ENCODE measurements at regions of chr2 and their contacts with region 1.

Region 1: GRCh38 chr2:157492189-157492773 is 48.4 kb upstream of the CYTIP start:
- DNase-seq: peak; percentile 65 to 70 (median 69)
- H3K4me3 ChIP-seq: no peak overlapping the region
- H3K4me3 Mint-ChIP-seq: no peak overlapping the region
- H3K27ac ChIP-seq: no peak overlapping the region
- H3K27ac Mint-ChIP-seq: peak overlapping the region in 1 of 7 donors; percentile 65
- H3K4me1 ChIP-seq: peaks cover 8% of the 10 kb centered on the region
- H3K4me1 Mint-ChIP-seq: peaks cover 17 to 19% (median 18%) of the 10 kb centered on the region in 4 donors
- H3K27me3 ChIP-seq: no peaks in the 10 kb centered on the region
- H3K27me3 Mint-ChIP-seq: no peaks in the 10 kb centered on the region

Region 2: DNA sequence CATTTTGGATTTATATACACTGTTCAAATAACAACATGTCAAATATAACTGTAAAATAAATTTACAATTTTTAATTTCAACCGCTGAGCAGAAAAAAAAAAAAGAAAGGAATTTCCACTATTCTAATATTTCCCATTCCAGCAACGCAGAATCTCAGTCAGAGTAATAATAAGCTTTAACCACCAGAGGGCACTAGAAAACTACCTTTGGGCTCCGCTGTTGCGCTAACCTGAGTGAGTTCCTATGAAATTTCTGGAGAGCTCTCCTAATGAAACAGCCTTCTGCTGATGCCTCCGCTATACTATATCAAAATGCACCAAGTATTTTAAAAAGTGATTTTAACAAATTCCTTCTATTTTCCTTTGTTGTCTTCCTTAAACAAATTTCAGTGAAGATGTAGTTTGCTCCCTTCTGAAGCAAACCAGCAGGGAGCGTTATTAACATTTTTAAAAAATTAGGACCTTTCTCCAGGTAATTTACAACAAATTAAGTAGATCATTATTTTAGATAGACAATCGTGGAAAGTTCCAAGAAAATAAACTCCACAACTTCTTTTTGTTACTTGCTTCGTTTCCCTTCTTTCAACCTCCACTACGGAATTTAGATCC is 189.7 kb before region 1 on chr2:
- CTCF ChIA-PET with region 1: interaction called, 100 read pairs
- POLR2A ChIA-PET with region 1: interaction called, 6 read pairs
- intact Hi-C with region 1: loop called (anchors 1 kb)
- DNase-seq: peak in 4 of 5 donors; percentile 56 to 63 (median 60)
- H3K4me3 ChIP-seq: no peak overlapping the region
- H3K4me3 Mint-ChIP-seq: no peak overlapping the region
- H3K27ac ChIP-seq: no peak overlapping the region
- H3K27ac Mint-ChIP-seq: no peak overlapping the region
- H3K4me1 ChIP-seq: no peaks in the 10 kb centered on the region
- H3K4me1 Mint-ChIP-seq: peaks cover 0 to 6% (median 2%) of the 10 kb centered on the region in 4 donors
- H3K27me3 ChIP-seq: no peaks in the 10 kb centered on the region
- H3K27me3 Mint-ChIP-seq: peaks cover 1 to 3% of the 10 kb centered on the region in 2 donors

Region 3: DNA sequence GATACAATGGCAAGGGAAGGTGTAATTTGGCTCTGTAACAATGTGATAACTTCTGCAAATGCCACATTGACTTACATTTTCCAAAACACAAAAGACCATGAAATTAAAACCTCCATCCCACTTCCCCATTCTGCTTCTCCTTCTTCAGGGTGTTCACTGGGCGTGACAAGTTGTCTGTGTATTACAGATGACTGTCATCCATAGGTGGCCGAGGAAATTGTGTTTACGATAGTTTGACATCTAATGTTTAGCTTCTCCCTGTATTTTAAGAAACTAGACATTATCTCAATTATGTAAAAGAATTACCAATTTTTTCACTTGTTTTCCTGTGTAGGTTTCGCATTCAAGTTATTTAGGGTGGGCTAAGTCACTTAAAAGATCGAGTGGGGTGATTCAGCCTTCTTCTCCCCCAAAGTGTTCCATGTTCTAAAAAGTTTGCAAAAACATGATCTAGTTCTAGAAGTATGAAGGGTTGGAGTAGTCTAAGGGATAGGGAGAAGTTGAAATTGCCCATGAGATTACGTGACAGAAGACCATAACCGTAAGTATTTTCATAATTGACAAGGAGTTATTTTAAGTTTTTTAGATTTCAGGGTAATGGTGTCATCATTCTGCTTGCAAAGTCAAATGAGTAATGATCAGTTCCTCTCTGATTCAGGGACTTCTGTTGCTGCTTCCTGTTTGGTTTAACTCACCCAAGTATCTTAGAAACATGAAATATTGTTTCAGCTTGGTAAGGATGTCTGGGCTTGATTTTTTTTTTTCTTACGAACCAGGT is 23.2 kb before region 1 on chr2:
- CTCF ChIA-PET with region 1: interaction called, 9 read pairs
- POLR2A ChIA-PET with region 1: interaction called, 9 read pairs
- intact Hi-C with region 1: loop called (anchors 2 kb)
- DNase-seq: peak; percentile 45 to 80 (median 70)
- H3K4me3 ChIP-seq: peak overlapping the region in 1 of 2 donors; percentile 50
- H3K4me3 Mint-ChIP-seq: peak overlapping the region; percentile 49 to 83 (median 69)
- H3K27ac ChIP-seq: peak overlapping the region; percentile 71
- H3K27ac Mint-ChIP-seq: peak overlapping the region; percentile 93 to 99 (median 98)
- H3K4me1 ChIP-seq: peaks cover 49% of the 10 kb centered on the region
- H3K4me1 Mint-ChIP-seq: peaks cover 49 to 78% (median 60%) of the 10 kb centered on the region in 4 donors
- H3K27me3 ChIP-seq: no peaks in the 10 kb centered on the region
- H3K27me3 Mint-ChIP-seq: no peaks in the 10 kb centered on the region

Region 4: GRCh38 chr2:157596992-157597681 is 104.9 kb after region 1 on chr2:
- CTCF ChIA-PET with region 1: interaction called, 21 read pairs
- POLR2A ChIA-PET with region 1: no interaction called
- intact Hi-C with region 1: loop called (anchors 1 kb)
- DNase-seq: peak; percentile 35 to 50 (median 40)
- H3K4me3 ChIP-seq: no peak overlapping the region
- H3K4me3 Mint-ChIP-seq: peak overlapping the region; percentile 44 to 75 (median 56)
- H3K27ac ChIP-seq: no peak overlapping the region
- H3K27ac Mint-ChIP-seq: no peak overlapping the region
- H3K4me1 ChIP-seq: no peaks in the 10 kb centered on the region
- H3K4me1 Mint-ChIP-seq: peaks cover 4 to 10% (median 6%) of the 10 kb centered on the region in 4 donors
- H3K27me3 ChIP-seq: no peaks in the 10 kb centered on the region
- H3K27me3 Mint-ChIP-seq: peaks cover 3 to 4% of the 10 kb centered on the region in 2 donors

Region 5: GRCh38 chr2:157672129-157672528 is 179.8 kb after region 1 on chr2:
- CTCF ChIA-PET with region 1: no interaction called
- POLR2A ChIA-PET with region 1: no interaction called
- intact Hi-C with region 1: no loop called
- DNase-seq: no peak
- H3K4me3 ChIP-seq: no peak overlapping the region
- H3K4me3 Mint-ChIP-seq: no peak overlapping the region
- H3K27ac ChIP-seq: no peak overlapping the region
- H3K27ac Mint-ChIP-seq: no peak overlapping the region
- H3K4me1 ChIP-seq: no peaks in the 10 kb centered on the region
- H3K4me1 Mint-ChIP-seq: no peaks in the 10 kb centered on the region
- H3K27me3 ChIP-seq: no peaks in the 10 kb centered on the region
- H3K27me3 Mint-ChIP-seq: peaks cover 0 to 2% of the 10 kb centered on the region in 2 donors

Region 6: GRCh38 chr2:157777427-157777826 is 285.1 kb after region 1 on chr2:
- CTCF ChIA-PET with region 1: no interaction called
- POLR2A ChIA-PET with region 1: no interaction called
- intact Hi-C with region 1: loop called (anchors 10 kb)
- DNase-seq: peak in 4 of 5 donors; percentile 35 to 49 (median 37)
- H3K4me3 ChIP-seq: no peak overlapping the region
- H3K4me3 Mint-ChIP-seq: no peak overlapping the region
- H3K27ac ChIP-seq: no peak overlapping the region
- H3K27ac Mint-ChIP-seq: no peak overlapping the region
- H3K4me1 ChIP-seq: no peaks in the 10 kb centered on the region
- H3K4me1 Mint-ChIP-seq: peaks cover 8 to 13% (median 8%) of the 10 kb centered on the region in 4 donors
- H3K27me3 ChIP-seq: no peaks in the 10 kb centered on the region
- H3K27me3 Mint-ChIP-seq: no peaks in the 10 kb centered on the region

Region 7: GRCh38 chr2:157898591-157898996 is 406.3 kb after region 1 on chr2:
- CTCF ChIA-PET with region 1: no interaction called
- POLR2A ChIA-PET with region 1: no interaction called
- intact Hi-C with region 1: loop called (anchors 5 kb)
- DNase-seq: peak in 4 of 5 donors; percentile 15 to 83 (median 32)
- H3K4me3 ChIP-seq: peak overlapping the region in 1 of 2 donors; percentile 11
- H3K4me3 Mint-ChIP-seq: peak overlapping the region; percentile 40 to 95 (median 90)
- H3K27ac ChIP-seq: peak overlapping the region; percentile 51
- H3K27ac Mint-ChIP-seq: peak overlapping the region; percentile 96 to 100 (median 99)
- H3K4me1 ChIP-seq: peaks cover 77% of the 10 kb centered on the region
- H3K4me1 Mint-ChIP-seq: peaks cover 62 to 79% (median 72%) of the 10 kb centered on the region in 4 donors
- H3K27me3 ChIP-seq: no peaks in the 10 kb centered on the region
- H3K27me3 Mint-ChIP-seq: no peaks in the 10 kb centered on the region

Region 8: GRCh38 chr2:158456309-158457066 is 964.2 kb after region 1 on chr2 and contains the starts of genes CCDC148 and PKP4:
- CTCF ChIA-PET with region 1: no interaction called
- POLR2A ChIA-PET with region 1: no interaction called
- intact Hi-C with region 1: loop called (anchors 10 kb)
- DNase-seq: peak; percentile 88 to 97 (median 90)
- H3K4me3 ChIP-seq: peak within 1 kb of the TSS; percentile 57 to 84
- H3K4me3 Mint-ChIP-seq: peak within 1 kb of the TSS; percentile 91 to 98 (median 94)
- H3K27ac ChIP-seq: peak within 1 kb of the TSS; percentile 67
- H3K27ac Mint-ChIP-seq: peak within 1 kb of the TSS; percentile 91 to 97 (median 93)
- H3K4me1 ChIP-seq: peaks cover 23% of the 10 kb centered on the region
- H3K4me1 Mint-ChIP-seq: peaks cover 17 to 38% (median 26%) of the 10 kb centered on the region in 4 donors
- H3K27me3 ChIP-seq: no peaks in the 10 kb centered on the region
- H3K27me3 Mint-ChIP-seq: peaks cover 0 to 3% of the 10 kb centered on the region in 2 donors
- total RNA-seq, gene CCDC148: not detected
- total RNA-seq, gene PKP4: 35.0 to 39.3 TPM

Measured in CD4-positive, alpha-beta memory T cell (primary cell).